B cell (primary cell): ENCODE measurements at regions of chr3 and their contacts with region 1.

Region 1: GRCh38 chr3:125374996-125375941 is at the start of gene ZNF148:
- DNase-seq: peak; percentile 94
- ATAC-seq: peak; percentile 94
- H3K4me3 ChIP-seq: peak within 1 kb of the TSS; percentile 72 to 99 (median 96)
- H3K4me3 Mint-ChIP-seq: peak within 1 kb of the TSS; percentile 97
- H3K27ac ChIP-seq: peak within 1 kb of the TSS; percentile 83 to 97
- H3K27ac Mint-ChIP-seq: peak within 1 kb of the TSS; percentile 96
- H3K4me1 ChIP-seq: peaks cover 19 to 23% of the 10 kb centered on the region in 2 donors
- H3K4me1 Mint-ChIP-seq: peaks cover 40% of the 10 kb centered on the region
- H3K27me3 ChIP-seq: no peaks in the 10 kb centered on the region
- H3K27me3 Mint-ChIP-seq: no peaks in the 10 kb centered on the region
- CTCF ChIP-seq: no peak
- total RNA-seq, gene ZNF148: 71.5 and 74.6 TPM in 2 replicates

Region 2: GRCh38 chr3:124730129-124730940 is 644.9 kb before region 1 on chr3 and contains the start of gene UMPS:
- CTCF ChIA-PET with region 1: no interaction called
- POLR2A ChIA-PET with region 1: no interaction called
- intact Hi-C with region 1: loop called (anchors 1 kb)
- DNase-seq: peak; percentile 94
- ATAC-seq: peak; percentile 97
- H3K4me3 ChIP-seq: peak within 1 kb of the TSS; percentile 86 to 99 (median 88)
- H3K4me3 Mint-ChIP-seq: peak within 1 kb of the TSS; percentile 99
- H3K27ac ChIP-seq: peak within 1 kb of the TSS; percentile 46 to 78
- H3K27ac Mint-ChIP-seq: peak within 1 kb of the TSS; percentile 94
- H3K4me1 ChIP-seq: peaks cover 10 to 14% of the 10 kb centered on the region in 2 donors
- H3K4me1 Mint-ChIP-seq: peaks cover 28% of the 10 kb centered on the region
- H3K27me3 ChIP-seq: peaks cover 0 to 10% (median 4%) of the 10 kb centered on the region in 4 experiments
- H3K27me3 Mint-ChIP-seq: peaks cover 20% of the 10 kb centered on the region
- CTCF ChIP-seq: no peak
- total RNA-seq, gene UMPS: 21.4 and 25.1 TPM in 2 replicates

Region 3: DNA sequence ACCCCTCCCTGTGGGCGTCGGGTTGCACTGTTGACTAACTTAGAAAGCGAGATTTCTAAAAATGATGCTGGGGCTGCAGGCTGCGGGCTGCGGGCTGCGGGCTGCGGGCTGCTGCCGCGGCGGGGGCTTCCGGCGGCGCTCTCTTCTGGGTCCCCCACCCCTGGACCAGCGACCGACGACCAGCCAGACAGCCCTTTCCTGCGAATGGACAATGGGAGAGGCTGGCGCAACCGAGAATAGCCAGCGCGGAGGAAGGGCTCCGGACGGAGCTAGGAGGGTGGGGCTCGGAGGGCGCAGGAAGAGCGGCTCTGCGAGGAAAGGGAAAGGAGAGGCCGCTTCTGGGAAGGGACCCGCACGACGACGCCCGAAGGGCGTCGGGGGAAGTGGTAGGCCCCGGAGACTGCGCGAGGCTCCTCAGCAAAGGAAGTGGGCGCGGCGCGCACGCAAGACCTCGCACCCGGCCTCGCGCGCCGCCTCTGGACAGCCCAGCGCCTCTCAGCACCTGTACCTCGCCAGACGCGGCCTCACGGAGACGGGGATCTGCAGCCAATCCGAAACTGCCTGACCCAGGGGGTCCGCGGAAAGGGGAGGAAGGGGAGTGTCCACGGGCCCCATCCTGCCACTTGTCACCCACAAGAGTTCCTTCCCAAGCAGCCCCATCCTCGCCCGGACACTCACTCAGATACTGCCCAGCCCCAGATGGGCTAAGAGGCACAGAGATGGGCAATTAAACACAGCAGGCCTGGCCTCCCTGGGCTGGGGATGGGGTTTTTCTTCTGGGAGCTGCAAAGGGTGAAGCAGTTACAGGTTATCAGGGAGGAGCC is 233.5 kb before region 1 on chr3:
- CTCF ChIA-PET with region 1: no interaction called
- POLR2A ChIA-PET with region 1: no interaction called
- intact Hi-C with region 1: loop called (anchors 5 kb)
- DNase-seq: peak; percentile 76
- ATAC-seq: peak; percentile 90
- H3K4me3 ChIP-seq: peak overlapping the region in 4 of 5 experiments; percentile 33 to 66 (median 54)
- H3K4me3 Mint-ChIP-seq: peak overlapping the region; percentile 85
- H3K27ac ChIP-seq: peak overlapping the region; percentile 42 to 57
- H3K27ac Mint-ChIP-seq: peak overlapping the region; percentile 90
- H3K4me1 ChIP-seq: peaks cover 34 to 76% of the 10 kb centered on the region in 2 donors
- H3K4me1 Mint-ChIP-seq: peaks cover 50% of the 10 kb centered on the region
- H3K27me3 ChIP-seq: no peaks in the 10 kb centered on the region
- H3K27me3 Mint-ChIP-seq: no peaks in the 10 kb centered on the region
- CTCF ChIP-seq: peak; percentile 9

Region 4: GRCh38 chr3:125186261-125186787 is 188.9 kb before region 1 on chr3:
- CTCF ChIA-PET with region 1: no interaction called
- POLR2A ChIA-PET with region 1: no interaction called
- intact Hi-C with region 1: no loop called
- DNase-seq: no peak
- ATAC-seq: no peak
- H3K4me3 ChIP-seq: no peak overlapping the region
- H3K4me3 Mint-ChIP-seq: no peak overlapping the region
- H3K27ac ChIP-seq: no peak overlapping the region
- H3K27ac Mint-ChIP-seq: no peak overlapping the region
- H3K4me1 ChIP-seq: no peaks in the 10 kb centered on the region
- H3K4me1 Mint-ChIP-seq: peaks cover 3% of the 10 kb centered on the region
- H3K27me3 ChIP-seq: no peaks in the 10 kb centered on the region
- H3K27me3 Mint-ChIP-seq: no peaks in the 10 kb centered on the region
- CTCF ChIP-seq: no peak

Region 5: DNA sequence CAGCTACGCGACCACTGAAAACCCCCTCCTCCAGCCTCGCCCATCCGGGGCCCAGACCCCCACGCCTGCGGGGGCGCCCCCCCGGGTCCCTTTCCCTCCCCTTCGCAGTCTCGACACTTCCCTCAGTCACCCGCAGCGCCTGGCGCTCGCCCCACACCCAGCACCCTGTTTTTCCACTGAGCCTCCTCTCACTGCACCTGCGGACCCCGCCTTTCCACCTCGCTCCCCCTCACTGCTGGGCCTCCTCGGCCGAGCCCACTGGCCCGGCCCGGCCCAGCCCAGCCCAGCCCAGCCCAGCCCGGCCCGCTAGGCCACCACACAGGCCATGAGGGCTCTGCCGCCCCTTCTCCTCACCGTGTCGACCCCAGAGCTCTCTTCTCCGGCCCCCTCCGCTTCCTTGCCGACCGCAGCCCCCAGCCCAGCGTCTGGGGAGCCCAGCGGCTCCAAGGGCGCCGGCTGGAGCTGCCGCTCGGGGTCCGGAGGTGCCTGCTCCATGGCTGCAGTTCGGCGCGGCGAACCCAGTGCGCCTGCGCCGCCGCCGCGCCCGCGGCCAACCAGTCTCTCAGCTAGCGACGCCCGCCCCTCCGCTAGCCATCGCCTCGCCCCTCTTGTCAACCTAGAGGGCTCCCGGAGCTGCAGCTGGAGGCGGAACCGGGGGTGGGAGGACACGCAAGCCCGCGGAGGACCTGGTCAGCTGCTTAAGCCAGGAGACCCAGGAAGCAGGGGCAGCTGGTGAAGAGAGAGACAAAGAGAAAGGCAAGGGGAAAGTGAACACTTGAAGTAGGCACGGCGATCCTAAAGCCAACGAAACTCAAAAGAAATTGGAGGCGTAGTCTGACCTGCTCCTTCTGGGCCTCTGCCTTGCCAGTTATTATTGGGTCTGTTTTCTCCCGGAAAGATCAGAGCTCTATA is 144.7 kb after region 1 on chr3 and contains the start of gene SNX4:
- CTCF ChIA-PET with region 1: no interaction called
- POLR2A ChIA-PET with region 1: interaction called, 4 read pairs
- intact Hi-C with region 1: loop called (anchors 2 kb)
- DNase-seq: peak; percentile 91
- ATAC-seq: peak; percentile 95
- H3K4me3 ChIP-seq: peak within 1 kb of the TSS; percentile 53 to 88 (median 77)
- H3K4me3 Mint-ChIP-seq: peak within 1 kb of the TSS; percentile 97
- H3K27ac ChIP-seq: peak within 1 kb of the TSS; percentile 43 to 78
- H3K27ac Mint-ChIP-seq: peak within 1 kb of the TSS; percentile 95
- H3K4me1 ChIP-seq: peaks cover 13 to 27% of the 10 kb centered on the region in 2 donors
- H3K4me1 Mint-ChIP-seq: peaks cover 34% of the 10 kb centered on the region
- H3K27me3 ChIP-seq: no peaks in the 10 kb centered on the region
- H3K27me3 Mint-ChIP-seq: no peaks in the 10 kb centered on the region
- CTCF ChIP-seq: no peak
- total RNA-seq, gene SNX4: 26.1 and 27.0 TPM in 2 replicates